ENCODE measurements at regions of chr11 and their contacts with region 1.

Region 1: DNA sequence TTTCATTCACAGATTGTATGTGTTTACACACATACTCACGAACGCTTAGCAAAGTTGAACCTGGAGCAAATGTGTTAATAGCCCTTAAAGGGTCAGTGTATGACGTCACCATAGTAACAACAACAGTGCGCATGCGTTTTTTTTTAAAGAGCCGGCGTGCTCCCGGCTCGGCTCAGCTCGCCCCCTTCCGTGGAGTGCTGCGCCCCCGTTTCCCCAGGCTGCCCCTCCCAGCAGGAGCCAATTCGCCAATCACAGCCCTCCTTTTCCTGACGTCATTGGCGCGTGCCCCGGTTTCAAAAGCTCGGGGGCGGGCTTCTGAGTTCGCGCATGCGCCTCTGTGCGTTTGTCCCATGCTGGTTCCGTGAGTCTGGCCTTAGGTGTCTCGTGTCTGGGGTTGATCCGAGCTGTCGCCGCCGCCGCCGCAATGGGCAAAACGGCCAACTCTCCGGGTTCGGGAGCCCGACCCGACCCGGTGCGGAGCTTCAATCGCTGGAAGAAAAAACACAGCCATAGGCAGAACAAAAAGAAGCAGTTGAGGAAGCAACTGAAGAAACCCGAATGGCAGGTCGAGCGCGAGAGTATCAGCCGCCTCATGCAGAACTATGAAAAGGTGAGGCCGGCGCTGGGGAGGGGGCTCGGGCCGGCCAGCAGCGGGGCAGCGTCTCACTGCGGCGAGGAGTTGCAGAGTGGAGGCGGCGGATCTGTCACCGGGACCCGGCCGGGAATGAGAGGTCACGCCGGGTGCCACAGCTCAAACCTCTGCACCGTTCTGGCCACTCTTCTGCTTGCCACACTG is at the start of gene DDX10:
- DNase-seq: peak; percentile 87 to 99
- H3K4me3 ChIP-seq: peak within 1 kb of the TSS; percentile 63 to 88
- H3K27ac ChIP-seq: peak within 1 kb of the TSS; percentile 37 to 65
- H3K4me1 ChIP-seq: peaks cover 8 to 21% of the 10 kb centered on the region in 2 donors
- H3K27me3 ChIP-seq: no peaks in the 10 kb centered on the region
- CTCF ChIP-seq: no peak
- total RNA-seq, gene DDX10: 21.9 TPM

Region 2: GRCh38 chr11:107457558-107458271 is 1207.2 kb before region 1 on chr11 and contains the start of gene CWF19L2:
- intact Hi-C with region 1: loop called (anchors 10 kb)
- DNase-seq: peak; percentile 33 to 93
- H3K4me3 ChIP-seq: peak within 1 kb of the TSS; percentile 73 to 81
- H3K27ac ChIP-seq: peak within 1 kb of the TSS; percentile 74 to 75
- H3K4me1 ChIP-seq: no peaks in the 10 kb centered on the region
- H3K27me3 ChIP-seq: no peaks in the 10 kb centered on the region
- CTCF ChIP-seq: no peak
- total RNA-seq, gene CWF19L2: 10.2 TPM

Region 3: GRCh38 chr11:108121274-108122155 is 543.4 kb before region 1 on chr11 and contains the start of gene ACAT1:
- intact Hi-C with region 1: loop called (anchors 5 kb)
- DNase-seq: peak; percentile 96 to 99
- H3K4me3 ChIP-seq: peak within 1 kb of the TSS; percentile 84 to 92
- H3K27ac ChIP-seq: peak within 1 kb of the TSS; percentile 96 to 97
- H3K4me1 ChIP-seq: peaks cover 0 to 20% of the 10 kb centered on the region in 2 donors
- H3K27me3 ChIP-seq: no peaks in the 10 kb centered on the region
- CTCF ChIP-seq: peak in 2 of 3 experiments; percentile 9 to 39
- total RNA-seq, gene ACAT1: 187 TPM

Measured in ascending aorta (tissue), 2 donors.